Left ventricle myocardium inferior (tissue), 1 donor: ENCODE measurements at regions of chr20 and their contacts with region 1.

Region 1: DNA sequence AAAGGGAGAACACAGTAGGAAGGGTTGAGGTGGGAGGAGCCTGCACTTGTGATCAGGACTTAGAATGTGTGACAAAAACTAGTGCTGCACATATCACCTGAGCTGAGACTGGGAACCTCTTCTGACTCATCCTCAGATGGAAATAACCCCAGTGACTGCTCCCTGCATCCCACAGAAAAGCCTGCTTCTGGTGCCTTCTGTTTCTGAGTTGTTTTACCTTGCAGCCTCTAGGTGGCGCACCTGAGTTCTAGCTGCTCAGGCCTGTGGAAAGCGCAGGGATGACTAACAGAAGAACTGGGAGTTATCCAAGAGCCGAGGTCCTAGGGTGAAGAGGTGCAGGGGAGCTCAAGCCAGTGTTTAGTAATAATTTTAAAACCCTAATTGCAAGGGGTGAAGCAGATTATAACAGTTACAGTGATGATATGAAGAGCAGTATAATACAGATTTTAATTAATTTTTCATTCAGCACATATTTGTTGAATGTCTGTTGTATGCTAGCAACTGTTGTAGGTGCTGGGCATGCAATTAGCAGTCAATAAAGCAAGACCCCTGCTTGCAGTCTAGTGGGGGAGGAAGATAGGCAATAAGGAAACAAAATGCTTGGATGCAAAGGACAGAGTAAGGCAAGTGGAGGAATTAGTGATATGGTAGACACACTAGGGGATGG is 302.5 kb downstream of the DHX35 start:
- DNase-seq: peak; percentile 54
- H3K4me3 ChIP-seq: no peak overlapping the region
- H3K27ac ChIP-seq: no peak overlapping the region
- H3K4me1 ChIP-seq: peaks cover 5% of the 10 kb centered on the region
- H3K27me3 ChIP-seq: peaks cover 33% of the 10 kb centered on the region
- CTCF ChIP-seq: peak; percentile 88

Region 2: DNA sequence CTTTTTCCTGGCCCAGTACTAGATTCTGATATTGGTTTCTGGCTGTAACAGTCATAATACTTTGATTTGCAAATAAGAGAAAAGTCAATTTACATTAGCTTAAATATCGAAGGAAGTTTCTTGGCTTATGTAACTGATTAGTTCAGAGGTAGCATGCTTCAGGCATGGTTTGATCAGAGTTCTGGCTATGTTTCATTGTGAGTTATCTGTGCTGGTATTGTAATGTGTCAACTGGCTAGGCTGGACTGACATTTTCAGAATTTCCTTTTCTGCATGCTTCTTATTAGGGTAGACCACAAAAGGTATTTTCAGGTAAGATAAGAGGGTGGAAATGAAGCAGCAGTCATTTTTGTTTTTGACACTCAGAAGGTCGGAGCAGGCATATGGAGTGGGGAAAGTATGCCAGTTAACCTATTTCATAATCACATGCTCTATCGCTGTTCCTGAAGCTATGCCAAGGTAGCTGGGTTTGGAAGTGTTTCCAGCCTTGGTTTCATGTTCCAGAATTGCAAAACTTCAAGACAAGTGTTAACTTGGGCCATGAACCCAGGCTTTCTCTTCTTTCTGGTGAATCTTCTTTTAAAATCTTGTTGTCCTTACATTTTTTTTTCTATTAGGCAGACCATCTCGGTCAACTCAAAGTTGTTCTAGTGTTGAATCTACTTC is 57.6 kb before region 1 on chr20:
- intact Hi-C with region 1: no loop called
- DNase-seq: no peak
- H3K4me3 ChIP-seq: no peak overlapping the region
- H3K27ac ChIP-seq: no peak overlapping the region
- H3K4me1 ChIP-seq: no peaks in the 10 kb centered on the region
- H3K27me3 ChIP-seq: no peaks in the 10 kb centered on the region
- CTCF ChIP-seq: no peak

Region 3: GRCh38 chr20:39376788-39377187 is 112.1 kb after region 1 on chr20:
- intact Hi-C with region 1: no loop called
- DNase-seq: no peak
- H3K4me3 ChIP-seq: no peak overlapping the region
- H3K27ac ChIP-seq: no peak overlapping the region
- H3K4me1 ChIP-seq: no peaks in the 10 kb centered on the region
- H3K27me3 ChIP-seq: no peaks in the 10 kb centered on the region
- CTCF ChIP-seq: no peak

Region 4: GRCh38 chr20:39874049-39874888 is 609.6 kb after region 1 on chr20:
- intact Hi-C with region 1: loop called (anchors 10 kb)
- DNase-seq: peak; percentile 58
- H3K4me3 ChIP-seq: no peak overlapping the region
- H3K27ac ChIP-seq: no peak overlapping the region
- H3K4me1 ChIP-seq: no peaks in the 10 kb centered on the region
- H3K27me3 ChIP-seq: peaks cover 4% of the 10 kb centered on the region
- CTCF ChIP-seq: peak; percentile 83